Activated T-helper 1 cell treated with anti-CD3 and anti-CD28 coated beads, Interleukin-12 subunit alpha, Interleukin-12 subunit beta, Interleukin-2, Interleukin-4 antibody, amounts not matched to agents 30 ng/mL and 10 ng/mL and 1 ng/mL, durations not matched to agents 14 hours and 24 hours and 36 hours (primary cell): ENCODE measurements at regions of chr3 and their contacts with region 1.

Region 1: DNA sequence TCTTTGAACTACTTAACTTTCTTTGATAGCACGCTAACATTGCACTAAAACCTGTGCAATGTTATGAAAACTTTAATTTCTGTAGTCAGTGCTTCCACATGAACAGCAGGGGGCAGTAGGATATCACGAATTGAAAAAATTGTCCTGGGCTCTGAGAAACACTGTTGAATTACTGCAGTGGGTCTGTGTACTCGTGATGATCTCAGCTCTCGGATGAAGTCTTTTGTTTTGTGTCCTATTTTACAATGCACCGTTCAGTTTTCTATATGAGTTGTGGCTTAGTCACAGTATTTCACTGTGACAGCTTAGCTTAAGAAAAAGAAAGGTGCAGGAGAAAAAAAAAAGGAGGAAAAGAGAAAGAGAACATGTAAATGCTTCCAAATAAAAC is 141.3 kb upstream of the CCDC54 start:
- DNase-seq: peak; percentile 44
- H3K4me3 Mint-ChIP-seq: peak overlapping the region; percentile 48
- H3K27ac Mint-ChIP-seq: no peak overlapping the region
- H3K4me1 Mint-ChIP-seq: peaks cover 11% of the 10 kb centered on the region
- H3K27me3 Mint-ChIP-seq: peaks cover 19% of the 10 kb centered on the region

Region 2: GRCh38 chr3:107028086-107028485 is 207.8 kb before region 1 on chr3:
- intact Hi-C with region 1: no loop called
- DNase-seq: no peak
- H3K4me3 Mint-ChIP-seq: no peak overlapping the region
- H3K27ac Mint-ChIP-seq: no peak overlapping the region
- H3K4me1 Mint-ChIP-seq: no peaks in the 10 kb centered on the region
- H3K27me3 Mint-ChIP-seq: no peaks in the 10 kb centered on the region

Region 3: DNA sequence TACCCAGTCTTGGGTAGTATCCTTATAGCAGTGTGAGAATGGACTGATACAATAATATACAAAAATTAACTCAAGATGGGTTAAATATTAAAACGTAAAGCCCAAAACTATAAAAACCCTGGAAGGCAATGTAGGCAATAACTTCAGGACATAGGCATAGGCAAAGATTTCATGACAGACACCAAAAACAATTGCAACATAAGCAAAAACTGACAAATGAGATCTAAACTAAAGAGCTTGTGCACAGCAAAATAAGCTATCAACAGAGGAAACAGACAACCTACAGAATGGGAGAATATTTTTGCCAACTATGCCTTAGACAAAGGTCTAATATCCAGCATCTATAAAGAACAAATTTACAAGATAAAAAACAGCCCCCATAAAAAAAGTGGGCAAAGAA is 63.5 kb before region 1 on chr3:
- intact Hi-C with region 1: no loop called
- DNase-seq: no peak
- H3K4me3 Mint-ChIP-seq: no peak overlapping the region
- H3K27ac Mint-ChIP-seq: no peak overlapping the region
- H3K4me1 Mint-ChIP-seq: no peaks in the 10 kb centered on the region
- H3K27me3 Mint-ChIP-seq: peaks cover 1% of the 10 kb centered on the region

Region 4: GRCh38 chr3:107258300-107258699 is 22.4 kb after region 1 on chr3:
- intact Hi-C with region 1: no loop called
- DNase-seq: no peak
- H3K4me3 Mint-ChIP-seq: no peak overlapping the region
- H3K27ac Mint-ChIP-seq: no peak overlapping the region
- H3K4me1 Mint-ChIP-seq: peaks cover 3% of the 10 kb centered on the region
- H3K27me3 Mint-ChIP-seq: peaks cover 17% of the 10 kb centered on the region

Region 5: DNA sequence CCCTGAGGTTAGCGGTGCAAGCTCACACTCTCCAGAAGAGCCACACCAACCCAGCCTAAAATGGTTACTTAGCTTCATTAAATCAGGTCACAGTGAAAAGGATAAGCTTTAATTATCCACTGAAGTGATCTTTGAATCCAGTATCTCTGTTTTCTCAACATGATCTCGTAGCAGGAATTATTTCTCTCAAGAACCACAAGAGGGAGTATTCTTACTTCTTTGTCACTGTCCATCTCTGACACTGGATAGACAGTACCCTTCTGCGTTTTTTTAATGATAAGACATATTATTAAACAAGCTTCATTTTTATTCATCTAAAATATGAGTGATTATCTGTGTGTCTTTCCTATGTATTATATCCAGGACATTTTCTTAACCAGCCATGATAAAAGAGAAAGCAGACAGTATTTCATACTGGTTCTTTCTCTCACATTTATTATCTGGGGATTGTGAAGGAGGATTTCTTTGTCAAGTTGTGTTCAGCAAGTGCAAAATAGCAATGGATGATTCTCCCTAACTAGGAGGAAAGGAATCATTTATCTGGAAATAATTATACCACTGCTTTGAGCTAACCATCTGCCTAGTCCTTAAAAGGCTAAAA is 36.0 kb after region 1 on chr3:
- intact Hi-C with region 1: loop called (anchors 2 kb)
- DNase-seq: no peak
- H3K4me3 Mint-ChIP-seq: no peak overlapping the region
- H3K27ac Mint-ChIP-seq: no peak overlapping the region
- H3K4me1 Mint-ChIP-seq: no peaks in the 10 kb centered on the region
- H3K27me3 Mint-ChIP-seq: peaks cover 15% of the 10 kb centered on the region

Region 6: DNA sequence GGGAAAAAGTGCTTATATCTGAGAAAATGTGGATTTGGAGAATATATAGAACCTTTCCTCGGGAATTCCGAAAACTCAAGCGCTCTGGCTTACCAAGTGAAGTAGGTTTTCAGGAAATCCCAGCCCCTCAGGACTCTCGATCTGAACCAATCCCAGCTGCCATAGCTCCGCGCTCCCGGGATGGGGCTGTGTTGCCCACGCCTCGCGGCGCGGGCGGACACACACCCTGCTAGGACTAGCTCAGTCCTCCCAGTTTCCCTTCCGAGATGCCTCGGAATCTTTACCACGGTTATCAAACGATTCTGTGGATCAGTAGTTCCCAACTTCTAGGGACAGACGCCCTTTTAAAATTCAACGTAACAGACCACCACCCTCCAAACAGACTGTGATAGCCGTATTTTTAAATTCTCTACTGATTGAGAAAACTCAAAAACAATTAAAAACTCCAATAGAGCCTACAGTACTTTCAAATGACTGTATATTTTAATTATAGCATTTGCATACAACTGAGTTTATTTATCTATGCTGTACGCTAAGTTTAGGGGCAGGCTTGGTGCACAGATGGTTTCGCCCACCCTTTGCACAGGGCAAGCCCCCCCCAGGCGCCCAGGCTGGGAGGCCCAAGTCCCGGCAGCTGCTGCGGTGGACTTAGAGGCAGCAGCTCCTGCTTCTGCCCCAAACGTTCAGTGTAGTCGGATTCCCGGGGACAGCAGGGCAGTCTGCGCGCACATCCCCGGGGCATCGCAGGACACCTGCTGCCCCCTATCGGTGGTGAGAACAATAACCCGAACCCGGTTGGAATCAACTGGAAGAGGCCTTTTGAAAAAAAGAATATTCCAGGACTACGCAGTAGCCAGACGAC is 193.6 kb after region 1 on chr3:
- intact Hi-C with region 1: loop called (anchors 1 kb)
- DNase-seq: peak; percentile 44
- H3K4me3 Mint-ChIP-seq: peak overlapping the region; percentile 82
- H3K27ac Mint-ChIP-seq: peak overlapping the region; percentile 44
- H3K4me1 Mint-ChIP-seq: peaks cover 21% of the 10 kb centered on the region
- H3K27me3 Mint-ChIP-seq: peaks cover 45% of the 10 kb centered on the region

Region 7: DNA sequence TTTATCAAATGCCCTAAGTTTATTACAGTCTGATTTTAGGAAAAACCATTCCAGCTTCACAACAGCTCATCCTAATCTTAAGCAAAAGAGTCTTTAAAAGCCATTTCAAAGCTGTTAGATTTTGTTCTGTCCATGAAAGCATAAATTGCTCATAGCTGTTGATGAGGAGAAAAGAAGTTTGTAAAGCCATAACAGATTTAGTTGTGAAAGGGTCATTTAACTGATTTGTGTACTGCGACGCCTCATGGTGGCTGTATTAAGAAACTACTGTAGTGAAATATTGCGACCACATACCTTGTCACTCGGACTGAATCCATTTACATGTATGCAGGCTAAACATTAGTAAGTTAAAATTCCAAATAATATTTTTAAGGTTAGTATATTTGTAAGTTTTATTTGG is 307.7 kb after region 1 on chr3:
- intact Hi-C with region 1: loop called (anchors 2 kb)
- DNase-seq: no peak
- H3K4me3 Mint-ChIP-seq: no peak overlapping the region
- H3K27ac Mint-ChIP-seq: no peak overlapping the region
- H3K4me1 Mint-ChIP-seq: no peaks in the 10 kb centered on the region
- H3K27me3 Mint-ChIP-seq: no peaks in the 10 kb centered on the region

Region 8: DNA sequence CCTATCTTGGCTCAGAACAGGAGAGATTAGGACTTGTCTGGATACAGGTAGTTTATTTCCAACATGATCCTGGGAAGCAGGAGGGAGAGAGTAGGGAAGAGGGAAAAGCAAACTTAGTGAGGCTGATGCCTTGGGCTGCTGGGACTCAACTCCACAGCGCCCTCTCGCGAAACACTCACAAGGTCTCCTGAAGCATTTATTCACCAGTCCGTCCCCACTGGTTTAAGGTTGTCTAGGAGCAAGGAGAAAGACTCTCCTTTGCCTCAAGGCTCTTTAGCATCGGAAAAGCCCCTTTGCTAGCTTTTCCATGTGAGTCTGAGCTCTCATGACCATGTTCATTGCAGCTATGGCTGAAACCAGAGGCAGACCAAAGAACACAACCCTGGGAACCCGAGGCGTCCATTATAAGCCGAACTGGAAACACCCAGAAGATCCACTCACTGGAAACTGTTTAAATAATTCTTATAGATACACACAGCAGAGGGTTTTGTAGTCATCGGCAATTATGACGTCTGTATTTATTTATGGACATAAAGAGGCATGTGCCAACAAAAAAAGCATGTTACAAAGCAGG is 610.4 kb after region 1 on chr3:
- intact Hi-C with region 1: loop called (anchors 5 kb)
- DNase-seq: no peak
- H3K4me3 Mint-ChIP-seq: no peak overlapping the region
- H3K27ac Mint-ChIP-seq: no peak overlapping the region
- H3K4me1 Mint-ChIP-seq: no peaks in the 10 kb centered on the region
- H3K27me3 Mint-ChIP-seq: peaks cover 5% of the 10 kb centered on the region

Region 9: DNA sequence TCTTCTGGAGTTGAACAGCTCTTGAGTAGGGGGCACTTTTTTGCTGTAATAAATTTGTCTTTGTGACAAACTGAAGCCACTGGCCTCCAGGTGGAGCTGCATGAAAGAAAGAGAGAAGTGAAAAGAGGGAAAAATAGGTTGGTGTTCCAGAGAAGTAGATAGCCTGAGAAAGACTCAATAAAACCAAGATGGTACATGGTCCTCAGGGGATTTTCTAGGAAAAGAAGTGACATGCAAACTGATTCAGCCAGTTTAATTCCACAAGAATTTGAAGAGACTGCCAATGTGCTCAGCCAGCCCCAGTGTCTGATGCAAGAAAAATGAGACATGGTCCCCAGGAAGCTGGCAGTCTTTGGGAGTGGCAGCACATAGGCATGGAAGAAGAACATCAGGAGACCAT is 702.2 kb after region 1 on chr3:
- intact Hi-C with region 1: loop called (anchors 5 kb)
- DNase-seq: no peak
- H3K4me3 Mint-ChIP-seq: no peak overlapping the region
- H3K27ac Mint-ChIP-seq: no peak overlapping the region
- H3K4me1 Mint-ChIP-seq: peaks cover 17% of the 10 kb centered on the region
- H3K27me3 Mint-ChIP-seq: peaks cover 5% of the 10 kb centered on the region

Region 10: DNA sequence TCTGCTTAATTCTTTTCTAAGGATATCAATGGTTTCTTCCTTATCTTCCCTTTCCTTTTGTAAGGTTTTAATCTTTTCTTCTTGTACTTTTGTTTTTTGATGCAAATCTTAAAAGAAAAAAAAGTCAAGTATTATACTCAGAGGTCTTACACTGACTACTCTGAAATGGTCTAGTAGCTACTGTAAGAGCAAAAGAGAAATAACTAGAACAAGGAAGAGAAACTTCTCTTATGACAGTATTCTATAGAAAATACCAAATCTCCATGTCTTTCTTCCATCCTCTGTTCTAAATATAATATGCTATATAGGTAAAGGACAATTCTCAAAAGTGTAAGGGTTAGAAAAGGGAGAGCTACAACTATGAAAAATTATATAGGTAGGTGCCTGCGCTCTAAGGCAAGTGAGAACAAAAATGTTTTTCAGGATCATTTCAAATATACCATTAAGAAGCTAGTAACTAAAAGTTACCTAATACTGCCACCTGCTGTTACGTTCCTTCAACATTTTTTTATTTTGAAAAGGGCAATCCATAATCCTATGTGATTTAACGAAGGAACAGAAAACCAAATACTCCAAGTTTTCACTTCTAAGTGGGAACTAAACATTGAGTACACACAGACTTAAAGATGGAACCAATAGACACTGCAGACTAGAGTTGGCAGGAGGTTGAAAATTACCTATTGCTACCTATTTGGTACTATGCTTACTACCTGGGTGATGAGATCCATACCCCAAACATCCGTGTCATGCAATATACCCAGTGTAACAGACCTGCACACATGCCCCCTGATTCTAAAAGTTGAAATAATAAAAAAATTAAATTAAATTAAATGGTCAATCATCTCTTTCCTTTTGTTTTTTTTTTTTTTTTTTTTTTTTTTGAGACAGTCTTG is 1316.6 kb after region 1 on chr3:
- intact Hi-C with region 1: loop called (anchors 5 kb)
- DNase-seq: no peak
- H3K4me3 Mint-ChIP-seq: no peak overlapping the region
- H3K27ac Mint-ChIP-seq: no peak overlapping the region
- H3K4me1 Mint-ChIP-seq: peaks cover 6% of the 10 kb centered on the region
- H3K27me3 Mint-ChIP-seq: no peaks in the 10 kb centered on the region